GM12878 (cell line): ENCODE measurements at regions of chr9 and their contacts with region 1.

Region 1: DNA sequence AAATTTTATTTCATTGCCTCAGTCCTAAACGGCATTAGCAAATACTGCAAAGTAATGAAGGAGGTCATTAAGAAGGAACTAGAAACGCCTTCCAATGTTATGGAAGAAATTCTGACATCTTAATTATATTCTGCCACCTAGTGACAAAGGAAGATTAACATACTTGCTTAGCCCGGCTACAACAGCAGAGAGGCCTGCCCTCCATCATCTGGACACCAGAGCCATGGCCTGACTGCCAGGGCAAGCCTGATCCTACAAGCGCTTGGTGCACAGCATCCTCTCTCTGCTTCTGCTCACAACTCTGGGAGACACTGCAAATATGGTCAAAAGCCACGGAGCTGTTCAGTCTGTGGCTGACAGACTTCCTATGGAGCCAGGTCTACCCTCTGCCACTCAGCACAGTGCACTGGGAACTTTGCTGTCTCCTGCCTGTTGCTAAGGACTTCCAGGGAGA is 87.3 kb upstream of the SLC44A1 start:
- DNase-seq: no peak
- ATAC-seq: peak; percentile 93
- H3K4me3 ChIP-seq: no peak overlapping the region
- H3K27ac ChIP-seq: no peak overlapping the region
- H3K4me1 ChIP-seq: no peaks in the 10 kb centered on the region
- H3K27me3 ChIP-seq: no peaks in the 10 kb centered on the region
- CTCF ChIP-seq: peak; percentile 27 to 54 (median 40); a peak in 4 of 6 replicates
- EP300 ChIP-seq: no peak
- POLR2A ChIP-seq: no peak
- RAD21 ChIP-seq: peak; percentile 63

Region 2: GRCh38 chr9:104774831-104775573 is 382.2 kb before region 1 on chr9:
- CTCF ChIA-PET with region 1: interaction called, 6 read pairs
- POLR2A ChIA-PET with region 1: no interaction called
- RAD21 ChIA-PET with region 1: interaction called, 5 read pairs
- SMC1A ChIA-PET with region 1: no interaction called
- in situ Hi-C with region 1: loop called (anchors 5 kb)
- intact Hi-C with region 1: no loop called
- DNase-seq: peak; percentile 85
- ATAC-seq: peak; percentile 84
- H3K4me3 ChIP-seq: peak overlapping the region; percentile 63
- H3K27ac ChIP-seq: peak overlapping the region; percentile 98
- H3K4me1 ChIP-seq: peaks cover 17% of the 10 kb centered on the region
- H3K27me3 ChIP-seq: no peaks in the 10 kb centered on the region
- CTCF ChIP-seq: no peak
- EP300 ChIP-seq: peak; percentile 13 to 57; a peak in 2 of 4 replicates
- POLR2A ChIP-seq: peak; percentile 73
- RAD21 ChIP-seq: no peak

Region 3: GRCh38 chr9:104780799-104781395 is 376.3 kb before region 1 on chr9:
- CTCF ChIA-PET with region 1: interaction called, 11 read pairs
- POLR2A ChIA-PET with region 1: no interaction called
- RAD21 ChIA-PET with region 1: interaction called, 7 read pairs
- SMC1A ChIA-PET with region 1: no interaction called
- in situ Hi-C with region 1: loop called (anchors 5 kb)
- intact Hi-C with region 1: loop called (anchors 1 kb)
- DNase-seq: no peak
- ATAC-seq: peak; percentile 62
- H3K4me3 ChIP-seq: no peak overlapping the region
- H3K27ac ChIP-seq: no peak overlapping the region
- H3K4me1 ChIP-seq: peaks cover 13% of the 10 kb centered on the region
- H3K27me3 ChIP-seq: no peaks in the 10 kb centered on the region
- CTCF ChIP-seq: peak; percentile 34 to 63 (median 50); a peak in 5 of 6 replicates
- EP300 ChIP-seq: no peak
- POLR2A ChIP-seq: no peak
- RAD21 ChIP-seq: peak; percentile 86

Region 4: GRCh38 chr9:104863180-104863883 is 293.8 kb before region 1 on chr9:
- CTCF ChIA-PET with region 1: interaction called, 52 read pairs
- POLR2A ChIA-PET with region 1: no interaction called
- RAD21 ChIA-PET with region 1: interaction called, 17 read pairs
- SMC1A ChIA-PET with region 1: interaction called, 31 read pairs
- in situ Hi-C with region 1: loop called (anchors 5 kb)
- intact Hi-C with region 1: loop called (anchors 1 kb)
- DNase-seq: peak; percentile 7
- ATAC-seq: peak; percentile 95
- H3K4me3 ChIP-seq: no peak overlapping the region
- H3K27ac ChIP-seq: no peak overlapping the region
- H3K4me1 ChIP-seq: peaks cover under 1% of the 10 kb centered on the region
- H3K27me3 ChIP-seq: no peaks in the 10 kb centered on the region
- CTCF ChIP-seq: peak; percentile 78 to 85 (median 82); a peak in 5 of 6 replicates
- EP300 ChIP-seq: no peak
- POLR2A ChIP-seq: no peak
- RAD21 ChIP-seq: peak; percentile 92

Region 5: DNA sequence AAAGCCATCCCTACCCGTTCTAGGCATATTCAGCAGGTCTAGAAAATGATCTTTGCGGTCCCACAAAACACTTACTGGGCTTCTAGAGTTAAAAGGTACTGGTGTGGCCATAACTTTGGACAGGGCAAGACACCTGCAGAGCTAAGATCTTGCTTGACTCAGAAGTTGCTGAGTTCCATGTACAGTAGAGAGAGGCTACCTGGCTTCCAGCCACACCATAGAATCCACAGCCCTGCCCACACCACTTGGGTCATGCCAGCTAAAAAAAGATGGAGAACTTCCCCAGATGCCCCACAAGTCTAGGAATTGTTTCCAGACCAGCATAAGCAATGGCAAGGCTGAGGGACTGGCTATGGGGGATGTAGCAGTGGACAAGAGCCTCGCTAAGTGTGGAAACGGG is 281.3 kb before region 1 on chr9:
- CTCF ChIA-PET with region 1: no interaction called
- POLR2A ChIA-PET with region 1: no interaction called
- RAD21 ChIA-PET with region 1: no interaction called
- SMC1A ChIA-PET with region 1: no interaction called
- in situ Hi-C with region 1: no loop called
- intact Hi-C with region 1: no loop called
- DNase-seq: no peak
- ATAC-seq: no peak
- H3K4me3 ChIP-seq: no peak overlapping the region
- H3K27ac ChIP-seq: no peak overlapping the region
- H3K4me1 ChIP-seq: no peaks in the 10 kb centered on the region
- H3K27me3 ChIP-seq: no peaks in the 10 kb centered on the region
- CTCF ChIP-seq: no peak
- EP300 ChIP-seq: no peak
- POLR2A ChIP-seq: no peak
- RAD21 ChIP-seq: no peak

Region 6: DNA sequence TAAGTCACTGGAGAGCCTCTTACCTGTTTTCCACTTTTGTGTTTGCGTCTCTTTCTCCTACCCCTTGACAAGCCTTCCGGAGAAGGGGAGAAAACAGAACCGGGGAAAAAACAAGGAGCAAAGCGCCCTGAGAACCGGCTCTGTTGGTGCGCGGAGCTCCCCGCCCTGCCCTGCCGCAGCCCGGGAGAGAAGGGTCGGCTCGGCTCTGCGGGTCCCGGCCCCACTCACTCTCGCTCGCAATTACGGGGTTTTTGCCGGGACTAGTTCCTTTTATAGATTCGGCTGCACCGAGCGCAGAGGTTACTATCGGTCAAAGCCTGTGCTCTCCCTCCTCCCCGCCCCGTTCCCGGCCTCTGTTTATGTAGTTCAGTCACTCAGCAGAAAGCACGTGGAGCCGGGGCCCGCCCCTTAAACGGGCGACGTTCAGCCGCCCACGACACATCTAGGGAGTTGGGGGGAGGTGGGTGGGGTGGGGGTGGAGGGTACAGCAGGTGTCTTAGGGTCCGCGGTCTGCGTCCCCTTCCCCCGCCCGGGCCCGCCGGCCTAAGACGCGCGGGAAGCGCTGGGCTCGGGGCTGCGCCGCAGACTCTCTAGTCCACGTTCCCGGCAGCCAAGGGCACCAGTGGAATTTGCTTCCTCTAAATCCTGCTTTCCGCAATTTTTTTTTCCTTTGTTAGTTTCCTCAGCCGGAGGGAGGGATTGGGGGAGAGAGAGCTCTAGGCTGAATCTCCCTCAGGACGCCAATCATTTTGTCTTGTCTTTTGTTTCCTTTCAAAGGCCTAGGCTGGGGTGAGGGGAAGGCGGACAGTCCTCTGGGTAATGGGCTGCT is 229.0 kb before region 1 on chr9 and contains the start of gene ABCA1:
- CTCF ChIA-PET with region 1: interaction called, 6 read pairs
- POLR2A ChIA-PET with region 1: no interaction called
- RAD21 ChIA-PET with region 1: no interaction called
- SMC1A ChIA-PET with region 1: interaction called, 4 read pairs
- in situ Hi-C with region 1: no loop called
- intact Hi-C with region 1: loop called (anchors 5 kb)
- DNase-seq: no peak
- ATAC-seq: peak; percentile 60
- H3K4me3 ChIP-seq: peak within 1 kb of the TSS; percentile 71
- H3K27ac ChIP-seq: no peak within 1 kb of the TSS
- H3K4me1 ChIP-seq: peaks cover 7% of the 10 kb centered on the region
- H3K27me3 ChIP-seq: peaks cover 9% of the 10 kb centered on the region in 2 experiments
- CTCF ChIP-seq: no peak
- EP300 ChIP-seq: no peak
- POLR2A ChIP-seq: no peak
- RAD21 ChIP-seq: no peak
- polyA plus RNA-seq, gene ABCA1: 0.09 to 0.29 TPM

Region 7: GRCh38 chr9:105204416-105204815 is 47.3 kb after region 1 on chr9:
- CTCF ChIA-PET with region 1: no interaction called
- POLR2A ChIA-PET with region 1: no interaction called
- RAD21 ChIA-PET with region 1: no interaction called
- SMC1A ChIA-PET with region 1: no interaction called
- in situ Hi-C with region 1: loop called (anchors 5 kb)
- intact Hi-C with region 1: no loop called
- DNase-seq: no peak
- ATAC-seq: no peak
- H3K4me3 ChIP-seq: no peak overlapping the region
- H3K27ac ChIP-seq: no peak overlapping the region
- H3K4me1 ChIP-seq: no peaks in the 10 kb centered on the region
- H3K27me3 ChIP-seq: no peaks in the 10 kb centered on the region
- CTCF ChIP-seq: no peak
- EP300 ChIP-seq: no peak
- POLR2A ChIP-seq: no peak
- RAD21 ChIP-seq: no peak